CD8-positive, alpha-beta T cell (primary cell): ENCODE measurements at regions of chr2 and their contacts with region 1.

Region 1: DNA sequence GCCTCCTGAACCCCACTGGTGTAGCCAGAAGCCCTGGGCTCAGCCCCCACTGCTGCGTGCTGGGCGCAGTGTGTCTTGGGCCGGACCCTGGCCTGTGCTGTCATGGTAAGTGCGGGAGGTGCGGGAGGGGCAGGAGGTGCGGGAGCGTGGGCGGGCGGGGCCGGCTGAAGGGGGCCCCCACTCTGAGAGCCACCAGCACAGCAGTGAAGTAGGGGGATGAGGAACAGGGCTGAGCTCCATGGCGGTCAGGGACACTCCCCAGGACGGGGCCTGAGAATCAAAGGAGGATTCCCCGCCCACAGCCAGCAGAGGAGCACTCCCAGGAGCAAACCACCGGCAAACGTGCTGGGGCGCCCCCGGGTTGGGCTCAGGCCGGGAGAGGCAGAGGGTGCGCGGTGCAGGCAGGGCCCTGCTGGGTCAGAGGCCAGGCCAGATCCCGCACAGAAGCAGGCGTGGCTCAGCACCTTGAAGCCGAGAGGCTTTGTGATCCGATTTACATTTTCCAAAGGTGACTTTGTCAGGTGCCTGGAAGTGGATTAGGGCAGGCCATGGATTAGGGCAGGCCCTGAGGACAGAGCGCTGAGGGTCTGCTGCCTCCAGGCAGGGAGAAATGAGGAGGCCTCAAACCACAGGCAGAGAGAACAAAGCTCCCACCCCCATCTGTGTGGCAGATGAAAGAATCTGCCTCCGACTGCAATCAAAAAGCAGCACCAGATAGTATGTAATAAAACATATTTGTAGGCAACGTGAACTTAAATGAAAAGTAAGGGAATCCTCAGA is 152.0 kb upstream of the RAB6C start:
- DNase-seq: no peak
- ATAC-seq: no peak
- H3K4me3 ChIP-seq: no peak overlapping the region
- H3K4me3 Mint-ChIP-seq: no peak overlapping the region
- H3K27ac ChIP-seq: no peak overlapping the region
- H3K27ac Mint-ChIP-seq: no peak overlapping the region
- H3K4me1 ChIP-seq: no peaks in the 10 kb centered on the region
- H3K4me1 Mint-ChIP-seq: no peaks in the 10 kb centered on the region
- H3K27me3 ChIP-seq: no peaks in the 10 kb centered on the region
- H3K27me3 Mint-ChIP-seq: peaks cover 6% of the 10 kb centered on the region
- CTCF ChIP-seq: no peak

Region 2: DNA sequence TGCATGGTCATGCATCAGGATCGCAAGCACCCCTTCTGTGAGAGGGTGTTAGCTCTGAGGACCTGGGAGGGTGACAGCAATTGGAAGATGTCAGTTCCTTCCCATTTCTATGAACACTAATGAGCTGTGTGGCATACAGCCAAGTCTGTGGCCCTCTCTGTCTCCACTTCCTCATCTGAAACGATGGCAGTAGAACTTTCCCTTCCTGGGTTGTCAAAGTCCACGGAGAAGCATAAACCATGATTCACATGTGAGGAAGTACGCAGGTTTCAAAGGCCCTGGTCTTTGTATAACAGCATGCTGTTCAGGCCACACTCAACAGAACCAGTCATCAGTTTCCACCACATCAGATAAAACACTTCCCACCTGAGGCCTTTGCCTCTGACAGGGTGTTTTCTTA is 15.4 kb before region 1 on chr2:
- CTCF ChIA-PET with region 1: no interaction called
- POLR2A ChIA-PET with region 1: no interaction called
- intact Hi-C with region 1: loop called in 1 of 2 experiments (anchors 1 kb)
- DNase-seq: peak in 1 of 9 experiments; percentile 41
- ATAC-seq: no peak
- H3K4me3 ChIP-seq: no peak overlapping the region
- H3K4me3 Mint-ChIP-seq: no peak overlapping the region
- H3K27ac ChIP-seq: no peak overlapping the region
- H3K27ac Mint-ChIP-seq: no peak overlapping the region
- H3K4me1 ChIP-seq: no peaks in the 10 kb centered on the region
- H3K4me1 Mint-ChIP-seq: no peaks in the 10 kb centered on the region
- H3K27me3 ChIP-seq: no peaks in the 10 kb centered on the region
- H3K27me3 Mint-ChIP-seq: no peaks in the 10 kb centered on the region
- CTCF ChIP-seq: no peak